ENCODE measurements at regions of chr2 and their contacts with region 1.

Region 1: GRCh38 chr2:9763356-9764152 is 79.7 kb upstream of the TAF1B start:
- DNase-seq: no peak
- ATAC-seq: peak in 5 of 8 donors; percentile 20 to 56 (median 47)
- H3K4me3 ChIP-seq: no peak overlapping the region
- H3K27ac ChIP-seq: peak overlapping the region in 7 of 10 donors; percentile 16 to 74 (median 44)
- H3K4me1 ChIP-seq: peaks cover 0 to 78% (median 38%) of the 10 kb centered on the region in 9 donors
- H3K27me3 ChIP-seq: no peaks in the 10 kb centered on the region
- CTCF ChIP-seq: no peak

Region 2: GRCh38 chr2:9565436-9566153 is 198.0 kb before region 1 on chr2:
- intact Hi-C with region 1: loop called in 1 of 10 experiments (anchors 5 kb)
- DNase-seq: peak; percentile 44 to 84
- ATAC-seq: peak; percentile 91 to 97 (median 93)
- H3K4me3 ChIP-seq: peak overlapping the region in 5 of 10 donors; percentile 6 to 28 (median 14)
- H3K27ac ChIP-seq: peak overlapping the region in 8 of 10 donors; percentile 52 to 80 (median 68)
- H3K4me1 ChIP-seq: peaks cover 0 to 27% (median 12%) of the 10 kb centered on the region in 9 donors
- H3K27me3 ChIP-seq: no peaks in the 10 kb centered on the region
- CTCF ChIP-seq: no peak

Region 3: DNA sequence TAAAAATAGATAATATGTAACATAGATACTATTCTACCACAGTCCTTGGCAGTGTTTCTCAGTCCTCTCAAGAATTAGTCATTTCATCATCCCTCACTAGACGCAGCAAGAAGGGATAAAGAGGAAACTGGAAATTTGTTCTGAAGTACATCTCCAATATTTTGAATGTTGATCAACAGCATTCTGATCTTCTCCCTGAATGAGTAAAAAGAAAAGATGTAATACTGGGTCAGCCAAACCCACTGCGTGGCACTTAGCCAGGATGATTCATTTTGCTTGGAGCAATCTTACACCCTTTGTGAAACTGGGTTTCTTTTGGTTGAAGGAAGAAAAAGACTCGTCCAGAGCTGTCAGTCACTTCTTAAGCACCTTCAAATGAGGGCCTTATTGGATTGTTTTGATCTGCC is 133.8 kb after region 1 on chr2:
- intact Hi-C with region 1: no loop called
- DNase-seq: peak; percentile 23 to 55
- ATAC-seq: peak in 6 of 8 donors; percentile 46 to 85 (median 65)
- H3K4me3 ChIP-seq: no peak overlapping the region
- H3K27ac ChIP-seq: peak overlapping the region in 1 of 10 donors; percentile 15
- H3K4me1 ChIP-seq: peaks cover 0 to 28% (median 18%) of the 10 kb centered on the region in 9 donors
- H3K27me3 ChIP-seq: no peaks in the 10 kb centered on the region
- CTCF ChIP-seq: no peak

Measured in heart right ventricle (tissue), 16 donors.